Common myeloid progenitor, CD34-positive (primary cell): ENCODE measurements at regions of chr19 and their contacts with region 1.

Region 1: DNA sequence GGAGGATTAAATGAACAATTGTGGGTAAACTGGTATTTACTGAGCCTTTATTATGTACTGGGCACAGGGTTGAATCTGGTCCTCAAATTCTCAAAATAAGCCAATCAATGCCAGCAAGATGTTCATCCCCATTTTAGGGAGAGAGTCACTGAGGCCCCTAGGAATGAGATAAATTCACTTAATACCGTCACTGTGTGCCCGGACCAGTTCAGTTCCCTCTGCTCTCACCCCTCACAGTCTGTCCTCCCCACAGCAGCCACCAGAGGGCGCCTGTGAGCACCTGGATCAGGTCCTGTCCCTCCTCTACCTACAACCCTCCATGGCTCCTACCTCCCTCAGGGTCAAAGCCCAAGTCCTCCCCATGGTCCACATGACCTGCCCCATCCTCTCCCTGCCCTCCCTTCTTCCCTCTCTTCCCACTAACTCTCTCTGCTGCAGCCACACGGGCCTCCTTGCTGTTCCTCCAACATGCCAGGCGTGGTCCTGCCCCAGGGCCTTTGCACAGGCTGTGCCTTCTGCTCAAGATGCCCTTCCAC is 42.0 kb upstream of the NFIC start:
- DNase-seq: peak; percentile 43 to 62 (median 53)
- H3K4me3 ChIP-seq: no peak overlapping the region
- H3K27ac ChIP-seq: no peak overlapping the region
- H3K4me1 ChIP-seq: no peaks in the 10 kb centered on the region
- H3K27me3 ChIP-seq: peaks cover 0 to 11% (median 0%) of the 10 kb centered on the region in 5 experiments

Region 2: GRCh38 chr19:3243819-3244700 is 80.3 kb before region 1 on chr19:
- CTCF ChIA-PET with region 1: no interaction called
- POLR2A ChIA-PET with region 1: no interaction called
- DNase-seq: peak; percentile 56 to 85 (median 84)
- H3K4me3 ChIP-seq: no peak overlapping the region
- H3K27ac ChIP-seq: no peak overlapping the region
- H3K4me1 ChIP-seq: no peaks in the 10 kb centered on the region
- H3K27me3 ChIP-seq: peaks cover 0 to 2% (median 0%) of the 10 kb centered on the region in 5 experiments

Region 3: GRCh38 chr19:3357992-3358688 is 33.8 kb after region 1 on chr19:
- CTCF ChIA-PET with region 1: no interaction called
- POLR2A ChIA-PET with region 1: no interaction called
- DNase-seq: peak in 2 of 3 donors; percentile 59 to 68
- H3K4me3 ChIP-seq: peak overlapping the region; percentile 37 to 93 (median 82)
- H3K27ac ChIP-seq: no peak overlapping the region
- H3K4me1 ChIP-seq: peaks cover 0 to 38% (median 30%) of the 10 kb centered on the region in 4 experiments
- H3K27me3 ChIP-seq: no peaks in the 10 kb centered on the region

Region 4: GRCh38 chr19:3471954-3472655 is 147.7 kb after region 1 on chr19:
- CTCF ChIA-PET with region 1: interaction called, 24 read pairs
- POLR2A ChIA-PET with region 1: no interaction called
- DNase-seq: peak in 2 of 3 donors; percentile 41 to 52
- H3K4me3 ChIP-seq: no peak overlapping the region
- H3K27ac ChIP-seq: no peak overlapping the region
- H3K4me1 ChIP-seq: peaks cover 0 to 7% (median 3%) of the 10 kb centered on the region in 4 experiments
- H3K27me3 ChIP-seq: no peaks in the 10 kb centered on the region

Region 5: GRCh38 chr19:3544742-3545668 is 220.6 kb after region 1 on chr19:
- CTCF ChIA-PET with region 1: no interaction called
- POLR2A ChIA-PET with region 1: no interaction called
- DNase-seq: peak in 2 of 3 donors; percentile 50 to 64
- H3K4me3 ChIP-seq: no peak overlapping the region
- H3K27ac ChIP-seq: no peak overlapping the region
- H3K4me1 ChIP-seq: peaks cover 0 to 13% (median 1%) of the 10 kb centered on the region in 4 experiments
- H3K27me3 ChIP-seq: no peaks in the 10 kb centered on the region